Mucosa of descending colon (tissue), 3 donors: ENCODE measurements at regions of chr1 and their contacts with region 1.

Region 1: GRCh38 chr1:17540255-17541001 is 930 bp downstream of the ARHGEF10L start:
- DNase-seq: peak; percentile 54 to 74 (median 73)
- ATAC-seq: peak; percentile 37
- H3K4me3 ChIP-seq: peak overlapping the region; percentile 36
- H3K4me1 ChIP-seq: peaks cover 38% of the 10 kb centered on the region
- CTCF ChIP-seq: no peak

Region 2: GRCh38 chr1:17553969-17554700 is 13.7 kb after region 1 on chr1:
- intact Hi-C with region 1: no loop called
- DNase-seq: no peak
- ATAC-seq: no peak
- H3K4me3 ChIP-seq: no peak overlapping the region
- H3K4me1 ChIP-seq: peaks cover 33% of the 10 kb centered on the region
- CTCF ChIP-seq: no peak

Region 3: DNA sequence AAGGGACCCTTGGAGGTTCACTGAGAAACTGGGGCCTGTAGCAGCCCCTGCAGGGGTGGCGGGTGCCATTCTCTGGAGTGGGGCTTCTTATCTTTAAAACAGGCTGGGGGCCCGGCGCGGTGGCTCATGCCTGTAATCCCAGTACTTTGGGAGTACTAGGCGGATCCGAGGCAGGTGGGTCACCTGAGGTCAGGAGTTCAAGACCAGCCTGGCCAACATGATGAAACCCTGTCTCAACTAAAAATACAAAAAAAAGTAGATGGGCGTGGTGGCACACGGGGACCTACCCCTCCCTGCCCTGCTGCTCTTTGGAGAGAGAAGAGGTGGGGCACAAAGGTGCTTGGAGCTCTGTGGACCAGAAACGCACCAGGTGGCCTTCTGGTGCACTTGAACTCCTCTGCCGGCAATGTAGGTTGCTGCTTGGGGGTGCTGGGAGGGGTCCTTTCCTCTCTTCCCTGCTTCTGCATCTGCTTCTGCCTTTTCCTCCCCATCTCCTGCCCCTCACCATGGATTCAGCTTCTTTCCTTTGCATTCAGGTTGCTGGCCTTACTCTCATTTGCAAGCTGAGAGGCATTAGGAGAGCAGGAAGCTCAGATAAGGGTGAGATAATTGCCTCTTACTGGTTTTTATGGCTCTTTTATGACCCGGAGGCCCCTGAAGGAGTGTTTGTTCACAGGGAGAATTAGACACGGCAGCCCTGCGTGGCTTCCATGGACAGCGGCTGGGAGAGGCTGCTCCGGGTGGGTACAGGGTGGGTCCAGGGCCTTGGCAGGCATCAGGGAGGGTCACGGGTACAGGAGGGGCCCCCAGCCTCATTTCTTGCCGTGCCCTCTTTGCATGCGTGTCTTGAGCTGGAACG is 56.5 kb after region 1 on chr1:
- intact Hi-C with region 1: loop called in 1 of 2 experiments (anchors 10 kb)
- DNase-seq: peak; percentile 85 to 90 (median 88)
- ATAC-seq: peak; percentile 76
- H3K4me3 ChIP-seq: no peak overlapping the region
- H3K4me1 ChIP-seq: peaks cover 55% of the 10 kb centered on the region
- CTCF ChIP-seq: no peak